ENCODE measurements at regions of chr10 and their contacts with region 1.

Region 1: GRCh38 chr10:26015092-26015491 is 81.1 kb downstream of the MYO3A start:
- DNase-seq: no peak
- ATAC-seq: peak in 1 of 4 donors; percentile 34
- H3K4me3 ChIP-seq: no peak overlapping the region
- H3K27ac ChIP-seq: peak overlapping the region in 4 of 12 donors; percentile 0 to 59 (median 8)
- H3K4me1 ChIP-seq: peaks cover 0 to 13% (median 0%) of the 10 kb centered on the region in 12 donors
- H3K27me3 ChIP-seq: no peaks in the 10 kb centered on the region
- CTCF ChIP-seq: no peak
- POLR2A ChIP-seq: no peak

Region 2: DNA sequence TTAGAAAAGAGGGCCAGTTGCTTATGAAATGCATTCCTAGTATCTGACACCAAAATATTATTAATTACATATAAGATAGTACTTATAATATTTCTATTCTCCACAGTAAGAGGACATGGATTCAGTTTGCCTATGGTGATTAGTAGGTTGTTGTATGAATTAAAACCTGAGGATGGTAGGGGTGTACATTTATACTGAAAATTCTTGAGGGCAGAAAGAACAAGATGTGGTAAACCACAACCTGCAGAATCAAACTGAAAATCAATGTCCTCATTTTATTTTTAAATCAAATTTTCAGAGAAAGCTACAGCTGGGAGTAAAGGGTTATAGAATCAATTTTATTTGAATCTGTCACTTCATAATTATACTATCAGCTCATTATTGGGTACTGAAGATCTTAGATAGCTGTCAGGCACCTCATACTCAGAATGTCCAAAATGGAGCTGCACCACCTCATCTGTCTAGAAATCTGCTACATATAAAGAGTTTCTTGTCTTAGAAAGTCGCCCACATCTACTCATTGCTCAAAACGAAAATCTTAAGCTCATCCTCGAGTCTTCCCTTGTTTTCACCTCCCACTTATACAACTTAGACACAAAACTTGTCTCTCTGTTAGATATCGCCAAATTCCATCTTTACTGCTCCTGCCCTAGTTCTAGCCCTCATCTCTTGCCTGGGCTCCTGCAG is 15.7 kb before region 1 on chr10:
- intact Hi-C with region 1: no loop called
- DNase-seq: no peak
- ATAC-seq: no peak
- H3K4me3 ChIP-seq: no peak overlapping the region
- H3K27ac ChIP-seq: no peak overlapping the region
- H3K4me1 ChIP-seq: no peaks in the 10 kb centered on the region
- H3K27me3 ChIP-seq: peaks cover 0 to 3% (median 0%) of the 10 kb centered on the region in 9 donors
- CTCF ChIP-seq: no peak
- POLR2A ChIP-seq: no peak

Region 3: DNA sequence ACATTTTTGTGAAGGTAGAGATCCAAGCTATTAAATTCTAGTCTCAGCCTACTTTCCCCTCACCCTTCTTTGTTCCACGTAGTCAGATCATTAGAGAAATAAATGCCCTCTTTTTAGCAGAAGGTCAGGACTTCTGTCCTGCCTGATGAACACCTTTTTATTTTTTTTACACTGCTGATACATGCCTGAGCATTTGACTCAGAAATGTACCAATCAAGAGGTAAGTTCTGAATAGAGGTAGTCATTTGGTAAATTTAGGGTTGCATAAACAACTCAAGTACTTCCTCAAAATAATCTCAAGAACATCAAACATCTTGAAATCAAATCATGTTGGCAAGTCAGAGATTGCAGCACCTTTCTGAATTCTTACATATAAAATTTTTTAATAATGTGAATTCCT is 52.6 kb after region 1 on chr10:
- intact Hi-C with region 1: loop called in 2 of 10 experiments (anchors 2 to 10 kb)
- DNase-seq: no peak
- ATAC-seq: no peak
- H3K4me3 ChIP-seq: no peak overlapping the region
- H3K27ac ChIP-seq: no peak overlapping the region
- H3K4me1 ChIP-seq: no peaks in the 10 kb centered on the region
- H3K27me3 ChIP-seq: no peaks in the 10 kb centered on the region
- CTCF ChIP-seq: no peak
- POLR2A ChIP-seq: no peak

Region 4: DNA sequence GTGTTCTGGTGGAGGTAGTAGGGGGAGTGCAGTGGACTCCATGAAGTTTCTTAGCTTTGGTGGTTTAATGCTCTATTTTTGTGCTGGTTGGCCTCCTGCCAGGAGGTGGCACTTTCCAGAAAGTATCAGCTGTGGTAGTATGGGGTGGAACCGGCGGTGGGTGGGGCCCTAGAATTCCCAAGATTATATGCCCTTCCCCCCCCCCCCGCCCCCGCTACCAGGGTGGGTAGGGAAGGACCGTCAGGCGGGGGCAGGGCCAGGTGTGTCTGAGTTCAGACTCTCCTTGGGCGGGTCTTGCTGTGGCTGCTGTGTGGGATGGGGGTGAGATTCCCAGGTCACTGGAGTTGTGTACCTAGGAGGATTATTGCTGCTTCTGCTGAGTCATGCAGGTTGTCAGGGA is 65.8 kb after region 1 on chr10:
- intact Hi-C with region 1: loop called in 1 of 10 experiments (anchors 10 kb)
- DNase-seq: no peak
- ATAC-seq: no peak
- H3K4me3 ChIP-seq: no peak overlapping the region
- H3K27ac ChIP-seq: no peak overlapping the region
- H3K4me1 ChIP-seq: no peaks in the 10 kb centered on the region
- H3K27me3 ChIP-seq: peaks cover 0 to 4% (median 0%) of the 10 kb centered on the region in 9 donors
- CTCF ChIP-seq: no peak
- POLR2A ChIP-seq: no peak